Mammary epithelial cell (primary cell): ENCODE measurements at regions of chr19 and their contacts with region 1.

Region 1: DNA sequence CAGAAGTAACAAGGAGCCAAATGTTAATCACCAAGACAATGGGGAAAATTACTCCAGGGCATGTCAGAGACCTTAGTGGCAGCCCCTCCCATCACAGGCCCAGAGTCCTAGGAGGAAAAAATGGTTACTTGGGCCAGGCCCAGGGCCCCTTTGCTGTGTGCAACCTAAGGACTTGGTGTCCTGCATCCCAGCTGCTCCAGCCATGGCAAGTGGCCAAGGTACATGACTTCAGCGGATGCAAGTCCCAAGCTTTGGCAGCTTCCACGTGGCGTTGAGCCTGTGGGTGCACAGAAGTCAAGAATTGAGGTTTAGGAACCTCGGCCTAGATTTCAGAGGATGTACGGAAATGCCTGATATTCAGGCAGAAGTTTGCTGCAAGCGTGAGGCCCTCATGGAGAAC is 46.7 kb downstream of the OR10H4 start:
- DNase-seq: no peak
- H3K4me3 ChIP-seq: no peak overlapping the region
- H3K27ac ChIP-seq: no peak overlapping the region
- H3K4me1 ChIP-seq: no peaks in the 10 kb centered on the region
- H3K27me3 ChIP-seq: no peaks in the 10 kb centered on the region
- CTCF ChIP-seq: no peak

Region 2: GRCh38 chr19:15714638-15715037 is 280.9 kb before region 1 on chr19:
- CTCF ChIA-PET with region 1: no interaction called
- dilution Hi-C with region 1: no loop called
- in situ Hi-C with region 1: no loop called
- intact Hi-C with region 1: no loop called
- DNase-seq: no peak
- H3K4me3 ChIP-seq: no peak overlapping the region
- H3K27ac ChIP-seq: no peak overlapping the region
- H3K4me1 ChIP-seq: no peaks in the 10 kb centered on the region
- H3K27me3 ChIP-seq: peaks cover 2% of the 10 kb centered on the region
- CTCF ChIP-seq: no peak

Region 3: GRCh38 chr19:15945301-15945700 is 50.2 kb before region 1 on chr19:
- CTCF ChIA-PET with region 1: no interaction called
- dilution Hi-C with region 1: loop called (anchors 5 kb)
- in situ Hi-C with region 1: no loop called
- intact Hi-C with region 1: no loop called
- DNase-seq: no peak
- H3K4me3 ChIP-seq: no peak overlapping the region
- H3K27ac ChIP-seq: no peak overlapping the region
- H3K4me1 ChIP-seq: no peaks in the 10 kb centered on the region
- H3K27me3 ChIP-seq: no peaks in the 10 kb centered on the region
- CTCF ChIP-seq: no peak

Region 4: GRCh38 chr19:16062789-16063188 is 67.3 kb after region 1 on chr19:
- CTCF ChIA-PET with region 1: no interaction called
- dilution Hi-C with region 1: no loop called
- in situ Hi-C with region 1: no loop called
- intact Hi-C with region 1: no loop called
- DNase-seq: no peak
- H3K4me3 ChIP-seq: no peak overlapping the region
- H3K27ac ChIP-seq: no peak overlapping the region
- H3K4me1 ChIP-seq: peaks cover 12% of the 10 kb centered on the region
- H3K27me3 ChIP-seq: no peaks in the 10 kb centered on the region
- CTCF ChIP-seq: peak; percentile 87 to 98

Region 5: GRCh38 chr19:16095071-16095571 is 99.6 kb after region 1 on chr19:
- CTCF ChIA-PET with region 1: no interaction called
- dilution Hi-C with region 1: no loop called
- in situ Hi-C with region 1: no loop called
- intact Hi-C with region 1: no loop called
- DNase-seq: no peak
- H3K4me3 ChIP-seq: no peak overlapping the region
- H3K27ac ChIP-seq: no peak overlapping the region
- H3K4me1 ChIP-seq: no peaks in the 10 kb centered on the region
- H3K27me3 ChIP-seq: no peaks in the 10 kb centered on the region
- CTCF ChIP-seq: no peak